K562 (cell line): ENCODE measurements at regions of chr3 and their contacts with region 1.

Region 1: GRCh38 chr3:127747723-127748521 is 74.4 kb downstream of the MGLL start:
- DNase-seq: no peak
- ATAC-seq: no peak
- H3K4me3 ChIP-seq: no peak overlapping the region
- H3K27ac ChIP-seq: no peak overlapping the region
- H3K4me1 ChIP-seq: no peaks in the 10 kb centered on the region
- H3K27me3 ChIP-seq: peaks cover 18 to 63% of the 10 kb centered on the region in 2 experiments
- CTCF ChIP-seq: no peak
- EP300 ChIP-seq: no peak
- POLR2A ChIP-seq: no peak
- RAD21 ChIP-seq: no peak

Region 2: DNA sequence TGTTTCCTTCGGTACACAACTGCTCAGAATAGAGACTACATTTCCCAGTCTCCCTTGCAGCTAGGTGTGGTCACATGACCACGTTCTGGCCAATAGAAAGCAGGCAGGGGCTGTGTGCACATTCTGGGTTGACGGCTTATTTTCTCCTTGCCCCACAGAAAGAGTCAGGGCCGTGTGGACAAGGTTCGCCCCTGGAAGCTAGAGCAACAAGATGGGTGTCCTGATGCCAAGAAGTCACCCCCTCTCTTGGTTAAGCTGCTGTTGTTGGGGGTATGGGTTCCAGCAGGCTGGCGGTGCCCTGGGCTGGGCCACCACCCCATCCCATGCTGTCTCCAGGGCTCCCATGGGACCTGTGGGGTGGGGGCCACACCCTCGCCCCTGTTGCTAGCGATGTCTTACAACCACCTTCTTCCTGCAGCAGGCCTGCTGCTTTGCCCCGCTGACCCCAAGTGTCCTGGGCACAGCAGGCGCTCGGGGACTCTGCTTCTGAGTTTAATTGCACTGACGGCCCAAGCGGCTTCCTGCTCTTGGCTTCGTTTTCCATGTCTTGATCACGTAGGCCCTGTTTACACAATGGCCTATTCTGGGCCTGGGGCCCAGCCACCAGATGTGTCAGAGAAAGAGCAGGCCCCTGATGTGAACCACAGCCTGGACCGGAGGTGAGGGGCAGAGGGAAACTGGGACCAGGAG is 50.2 kb before region 1 on chr3:
- CTCF ChIA-PET with region 1: no interaction called
- POLR2A ChIA-PET with region 1: interaction called, 3 read pairs
- in situ Hi-C with region 1: no loop called
- intact Hi-C with region 1: loop called (anchors 5 kb)
- DNase-seq: peak; percentile 66 to 79 (median 70)
- ATAC-seq: peak; percentile 92
- H3K4me3 ChIP-seq: no peak overlapping the region
- H3K27ac ChIP-seq: no peak overlapping the region; the same call in 2 of the 3 replicates
- H3K4me1 ChIP-seq: peaks cover 20 to 42% of the 10 kb centered on the region in 2 experiments
- H3K27me3 ChIP-seq: peaks cover 0 to 8% of the 10 kb centered on the region in 2 experiments; a peak in 1 of 5 replicates
- CTCF ChIP-seq: no peak
- EP300 ChIP-seq: no peak
- POLR2A ChIP-seq: no peak
- RAD21 ChIP-seq: no peak

Region 3: DNA sequence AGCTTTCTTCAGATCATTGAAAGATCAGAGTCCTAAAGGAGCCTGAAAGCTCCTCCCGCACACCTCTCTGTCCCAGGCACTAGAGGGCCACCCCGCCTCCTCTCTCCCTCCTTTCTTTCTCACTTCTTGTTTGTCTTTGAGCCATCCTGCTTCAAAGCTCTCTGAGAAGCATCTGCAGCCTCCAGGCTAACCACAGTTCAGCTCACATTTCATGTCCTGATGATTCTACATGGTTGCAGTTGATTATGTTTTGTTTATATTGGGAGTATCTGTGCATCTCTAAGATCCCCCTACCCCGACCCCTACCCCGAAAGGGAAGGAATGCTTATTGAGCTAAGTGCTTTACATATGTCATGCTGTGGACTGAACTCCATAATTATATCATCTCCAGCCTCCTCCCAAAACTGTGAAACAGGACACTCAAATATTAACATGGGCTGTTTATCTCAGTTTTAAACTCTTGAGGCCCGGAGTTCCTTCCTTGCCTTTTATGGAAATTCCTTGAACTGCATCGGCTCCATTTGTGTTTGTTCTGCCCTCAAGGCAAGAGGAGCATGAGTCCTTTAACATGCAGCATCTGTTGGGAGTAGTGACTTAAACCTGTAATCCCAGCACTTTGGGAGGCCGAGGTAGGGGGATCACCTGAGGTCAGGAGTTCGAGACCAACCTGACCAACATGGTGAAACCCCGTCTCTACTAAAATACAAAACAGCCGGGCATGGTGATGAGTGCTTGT is 43.5 kb after region 1 on chr3:
- CTCF ChIA-PET with region 1: no interaction called
- POLR2A ChIA-PET with region 1: no interaction called
- in situ Hi-C with region 1: no loop called
- intact Hi-C with region 1: no loop called
- DNase-seq: peak; percentile 6 to 22 (median 16)
- ATAC-seq: peak; percentile 80
- H3K4me3 ChIP-seq: no peak overlapping the region
- H3K27ac ChIP-seq: no peak overlapping the region
- H3K4me1 ChIP-seq: no peaks in the 10 kb centered on the region; a peak in 1 of 5 replicates
- H3K27me3 ChIP-seq: peaks cover 15 to 57% of the 10 kb centered on the region in 2 experiments; a peak in 3 of 5 replicates
- CTCF ChIP-seq: peak in 1 of 3 experiments; percentile 12; a peak in 1 of 6 replicates
- EP300 ChIP-seq: no peak
- POLR2A ChIP-seq: no peak
- RAD21 ChIP-seq: peak in 1 of 2 experiments; percentile 22; a peak in 1 of 4 replicates